Common myeloid progenitor, CD34-positive (primary cell): ENCODE measurements at regions of chr3 and their contacts with region 1.

Region 1: DNA sequence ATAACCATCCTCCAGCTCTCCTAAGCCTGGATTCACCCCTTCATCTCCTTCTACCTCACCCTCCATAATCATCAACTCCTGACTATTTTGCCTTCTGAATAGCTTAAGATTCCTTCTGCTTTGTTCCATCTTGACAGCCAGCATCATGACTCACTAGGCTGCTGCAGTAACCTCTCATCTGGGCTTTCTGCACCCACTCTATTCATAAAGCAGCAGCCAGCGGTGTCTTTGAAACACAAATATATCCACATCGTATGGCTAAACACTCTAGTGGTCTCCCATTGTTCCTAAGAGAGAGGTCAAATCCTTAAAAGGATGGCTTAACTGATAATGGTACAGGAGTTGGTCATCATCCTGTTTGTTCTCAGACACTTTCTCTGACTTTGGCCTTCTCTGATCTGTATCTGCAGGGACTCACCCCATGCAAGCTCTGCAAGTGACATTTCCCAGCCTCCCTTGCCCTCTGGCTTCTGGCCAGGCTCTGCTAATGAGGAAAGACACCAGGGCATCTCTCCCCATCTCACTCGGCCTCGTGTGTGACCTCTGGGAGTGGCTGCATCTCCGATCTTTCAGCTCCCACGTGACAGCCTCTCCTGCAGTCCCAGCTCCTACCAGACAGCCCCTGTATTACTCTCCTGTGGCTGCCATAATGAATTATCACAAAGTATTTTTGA is 6.2 kb downstream of the GRK7 start:
- DNase-seq: no peak
- H3K4me3 ChIP-seq: no peak overlapping the region
- H3K27ac ChIP-seq: no peak overlapping the region
- H3K4me1 ChIP-seq: peaks cover 20 to 36% (median 23%) of the 10 kb centered on the region in 4 experiments
- H3K27me3 ChIP-seq: no peaks in the 10 kb centered on the region

Region 2: DNA sequence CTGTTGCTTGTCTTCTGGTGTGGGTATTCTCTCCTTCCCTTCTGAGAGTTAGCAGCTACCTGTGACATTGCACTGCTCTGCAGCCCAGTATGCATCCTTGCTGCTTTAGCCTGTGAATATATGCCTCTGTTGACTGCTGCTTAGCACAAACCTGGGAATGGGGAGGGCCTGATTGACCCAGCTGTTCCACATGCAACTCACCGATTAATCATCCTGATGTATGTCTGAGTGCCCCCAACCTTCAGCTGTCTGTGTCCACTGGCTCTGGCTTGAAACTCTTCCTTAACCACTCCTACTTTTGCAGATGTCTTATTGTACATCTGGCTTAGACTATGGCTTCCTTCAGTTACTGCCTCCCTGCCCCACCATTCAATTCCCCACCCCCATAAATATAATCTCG is 163.5 kb before region 1 on chr3:
- CTCF ChIA-PET with region 1: no interaction called
- POLR2A ChIA-PET with region 1: no interaction called
- DNase-seq: no peak
- H3K4me3 ChIP-seq: no peak overlapping the region
- H3K27ac ChIP-seq: no peak overlapping the region
- H3K4me1 ChIP-seq: peaks cover 0 to 24% (median 7%) of the 10 kb centered on the region in 4 experiments
- H3K27me3 ChIP-seq: no peaks in the 10 kb centered on the region

Region 3: GRCh38 chr3:141796081-141796888 is 26.9 kb after region 1 on chr3:
- CTCF ChIA-PET with region 1: interaction called, 18 read pairs
- POLR2A ChIA-PET with region 1: interaction called, 5 read pairs
- DNase-seq: peak; percentile 88 to 99 (median 98)
- H3K4me3 ChIP-seq: peak overlapping the region in 5 of 7 experiments; percentile 1 to 68 (median 44)
- H3K27ac ChIP-seq: peak overlapping the region; percentile 61 to 77
- H3K4me1 ChIP-seq: peaks cover 7 to 62% (median 50%) of the 10 kb centered on the region in 4 experiments
- H3K27me3 ChIP-seq: no peaks in the 10 kb centered on the region